CD14-positive monocyte (primary cell): ENCODE measurements at regions of chr14 and their contacts with region 1.

Region 1: DNA sequence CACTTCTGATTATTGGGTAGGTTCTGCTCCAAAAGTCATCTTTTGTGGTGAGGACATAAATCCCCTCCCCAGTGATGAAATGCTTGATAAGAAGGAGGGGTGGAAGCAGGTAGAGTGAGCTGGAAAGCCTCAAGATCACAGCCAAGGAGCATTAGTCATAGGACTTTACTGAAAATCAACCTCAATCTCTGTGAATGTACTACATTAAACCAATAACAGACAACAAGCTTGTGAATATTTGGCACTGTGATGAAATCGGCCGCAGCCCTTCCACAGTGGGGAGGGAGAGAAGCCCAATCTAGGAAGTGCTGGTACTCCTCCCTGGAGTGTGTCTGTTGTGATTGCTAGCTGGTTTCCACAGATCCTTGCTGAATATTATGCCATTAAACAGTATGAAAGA is 41.2 kb upstream of the PTCSC3 start:
- DNase-seq: no peak
- H3K4me3 ChIP-seq: no peak overlapping the region
- H3K4me3 Mint-ChIP-seq: no peak overlapping the region
- H3K27ac ChIP-seq: no peak overlapping the region
- H3K27ac Mint-ChIP-seq: no peak overlapping the region
- H3K4me1 ChIP-seq: no peaks in the 10 kb centered on the region
- H3K4me1 Mint-ChIP-seq: no peaks in the 10 kb centered on the region
- H3K27me3 ChIP-seq: peaks cover 3 to 10% of the 10 kb centered on the region in 2 donors
- H3K27me3 Mint-ChIP-seq: peaks cover 4 to 15% (median 7%) of the 10 kb centered on the region in 3 donors
- CTCF ChIP-seq: no peak

Region 2: GRCh38 chr14:35789651-35790050 is 428.1 kb before region 1 on chr14:
- intact Hi-C with region 1: no loop called
- DNase-seq: no peak
- H3K4me3 ChIP-seq: no peak overlapping the region
- H3K4me3 Mint-ChIP-seq: no peak overlapping the region
- H3K27ac ChIP-seq: no peak overlapping the region
- H3K27ac Mint-ChIP-seq: no peak overlapping the region
- H3K4me1 ChIP-seq: no peaks in the 10 kb centered on the region
- H3K4me1 Mint-ChIP-seq: no peaks in the 10 kb centered on the region
- H3K27me3 ChIP-seq: no peaks in the 10 kb centered on the region
- H3K27me3 Mint-ChIP-seq: peaks cover 0 to 2% (median 0%) of the 10 kb centered on the region in 3 donors
- CTCF ChIP-seq: no peak

Region 3: DNA sequence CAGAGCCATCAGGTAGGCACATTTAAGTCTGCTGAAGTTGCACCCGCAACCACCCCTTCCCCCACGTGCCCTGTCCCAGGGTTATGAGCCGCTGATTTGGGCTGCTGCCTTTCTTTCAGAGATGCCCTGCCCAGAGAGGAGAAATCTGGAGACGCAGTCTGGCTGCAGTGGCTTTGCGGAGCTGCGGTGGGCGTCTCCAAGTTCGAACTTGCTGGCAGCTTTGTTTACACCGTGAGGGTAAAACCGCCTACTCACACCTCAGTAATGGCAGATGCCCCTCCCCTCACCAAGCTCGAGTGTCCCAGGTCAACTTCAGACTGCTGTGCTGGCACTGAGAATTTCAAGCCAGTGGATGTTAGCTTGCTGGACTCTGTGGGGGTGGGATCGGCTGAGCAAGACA is 56.0 kb before region 1 on chr14:
- intact Hi-C with region 1: no loop called
- DNase-seq: no peak
- H3K4me3 ChIP-seq: no peak overlapping the region
- H3K4me3 Mint-ChIP-seq: no peak overlapping the region
- H3K27ac ChIP-seq: no peak overlapping the region
- H3K27ac Mint-ChIP-seq: no peak overlapping the region
- H3K4me1 ChIP-seq: no peaks in the 10 kb centered on the region
- H3K4me1 Mint-ChIP-seq: no peaks in the 10 kb centered on the region
- H3K27me3 ChIP-seq: no peaks in the 10 kb centered on the region
- H3K27me3 Mint-ChIP-seq: peaks cover 3 to 12% (median 3%) of the 10 kb centered on the region in 3 donors
- CTCF ChIP-seq: no peak

Region 4: GRCh38 chr14:36320200-36320896 is 102.6 kb after region 1 on chr14 and contains the start of gene MBIP:
- intact Hi-C with region 1: no loop called
- DNase-seq: peak; percentile 91 to 95 (median 92)
- H3K4me3 ChIP-seq: peak within 1 kb of the TSS; percentile 66 to 100 (median 89)
- H3K4me3 Mint-ChIP-seq: peak within 1 kb of the TSS; percentile 93 to 95
- H3K27ac ChIP-seq: peak within 1 kb of the TSS; percentile 61 to 84
- H3K27ac Mint-ChIP-seq: peak within 1 kb of the TSS; percentile 81 to 93 (median 89)
- H3K4me1 ChIP-seq: peaks cover 11 to 17% of the 10 kb centered on the region in 2 donors
- H3K4me1 Mint-ChIP-seq: peaks cover 13% of the 10 kb centered on the region
- H3K27me3 ChIP-seq: peaks cover 28 to 34% of the 10 kb centered on the region in 2 donors
- H3K27me3 Mint-ChIP-seq: peaks cover 10 to 16% (median 11%) of the 10 kb centered on the region in 3 donors
- CTCF ChIP-seq: no peak
- polyA plus RNA-seq, gene MBIP: 6.6 to 9.1 (median 8.0) TPM

Region 5: GRCh38 chr14:36363697-36364096 is 146.0 kb after region 1 on chr14:
- intact Hi-C with region 1: loop called in 1 of 2 experiments (anchors 10 kb)
- DNase-seq: no peak
- H3K4me3 ChIP-seq: no peak overlapping the region
- H3K4me3 Mint-ChIP-seq: no peak overlapping the region
- H3K27ac ChIP-seq: no peak overlapping the region
- H3K27ac Mint-ChIP-seq: no peak overlapping the region
- H3K4me1 ChIP-seq: peaks cover 14 to 18% of the 10 kb centered on the region in 2 donors
- H3K4me1 Mint-ChIP-seq: peaks cover 18% of the 10 kb centered on the region
- H3K27me3 ChIP-seq: peaks cover 11 to 12% of the 10 kb centered on the region in 2 donors
- H3K27me3 Mint-ChIP-seq: peaks cover 4 to 6% (median 5%) of the 10 kb centered on the region in 3 donors
- CTCF ChIP-seq: no peak

Region 6: GRCh38 chr14:36383674-36384431 is 166.1 kb after region 1 on chr14:
- intact Hi-C with region 1: loop called in 1 of 2 experiments (anchors 10 kb)
- DNase-seq: no peak
- H3K4me3 ChIP-seq: no peak overlapping the region
- H3K4me3 Mint-ChIP-seq: no peak overlapping the region
- H3K27ac ChIP-seq: no peak overlapping the region
- H3K27ac Mint-ChIP-seq: no peak overlapping the region
- H3K4me1 ChIP-seq: no peaks in the 10 kb centered on the region
- H3K4me1 Mint-ChIP-seq: peaks cover 6% of the 10 kb centered on the region
- H3K27me3 ChIP-seq: no peaks in the 10 kb centered on the region
- H3K27me3 Mint-ChIP-seq: peaks cover 0 to 3% (median 0%) of the 10 kb centered on the region in 3 donors
- CTCF ChIP-seq: no peak